Dorsolateral prefrontal cortex (tissue), 120 donors: ENCODE measurements at regions of chr3 and their contacts with region 1.

Region 1: DNA sequence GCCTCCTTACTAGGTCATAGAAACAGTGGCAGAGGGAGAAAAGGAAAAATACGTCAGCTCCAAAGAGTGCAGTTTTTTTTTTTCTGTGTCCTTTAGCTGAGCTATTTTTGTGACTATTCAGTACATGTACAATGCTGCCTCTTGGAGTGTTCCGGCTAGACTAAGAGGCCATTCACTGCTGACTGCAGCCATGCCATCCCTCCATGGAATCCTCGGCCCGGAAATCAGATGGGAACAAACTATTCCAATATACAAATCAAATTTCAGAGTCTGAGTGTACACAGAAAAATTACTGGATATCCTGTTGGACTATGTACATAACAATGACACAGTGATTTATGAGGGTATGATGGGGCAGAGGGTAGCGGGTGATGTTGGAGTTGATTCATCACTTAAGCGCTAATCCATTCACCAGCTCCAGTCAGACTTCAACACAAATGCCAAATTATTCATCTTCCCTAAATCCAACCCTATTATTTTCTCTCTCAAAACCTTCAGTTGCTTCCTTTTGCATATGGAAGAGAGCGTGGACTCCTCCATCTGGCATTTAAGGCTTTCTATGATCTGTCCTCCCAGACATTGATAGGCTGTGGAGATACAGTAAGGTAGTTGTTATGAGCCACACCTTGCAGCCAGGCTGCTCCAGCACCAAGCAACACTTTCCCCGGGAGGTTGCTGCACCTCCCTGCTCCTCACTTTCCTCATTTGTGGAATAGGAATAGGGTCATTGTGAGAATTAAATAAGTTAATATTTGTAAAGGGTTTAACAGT is 109.1 kb downstream of the LPP start:
- DNase-seq: peak in 6 of 10 donors; percentile 52 to 76 (median 60)
- H3K4me3 ChIP-seq: peak overlapping the region in 26 of 59 donors; percentile 2 to 50 (median 18)
- H3K27ac ChIP-seq: peak overlapping the region; percentile 27 to 95 (median 82)
- H3K27me3 ChIP-seq: no peaks in the 10 kb centered on the region
- CTCF ChIP-seq: peak in 18 of 56 donors; percentile 6 to 41 (median 20)

Region 2: GRCh38 chr3:187745201-187746058 is 517.7 kb before region 1 on chr3 and contains the start of gene BCL6:
- intact Hi-C with region 1: loop called (anchors 2 to 5 kb)
- DNase-seq: peak; percentile 82 to 92 (median 90)
- H3K4me3 ChIP-seq: peak within 1 kb of the TSS; percentile 55 to 98 (median 83)
- H3K27ac ChIP-seq: peak within 1 kb of the TSS; percentile 87 to 100 (median 99)
- H3K27me3 ChIP-seq: no peaks in the 10 kb centered on the region
- CTCF ChIP-seq: peak in 13 of 56 donors; percentile 1 to 27 (median 9)
- total RNA-seq, gene BCL6: 47.6 to 270 (median 94.0) TPM

Region 3: GRCh38 chr3:188154014-188154808 is 108.9 kb before region 1 on chr3 and contains the start of gene LPP:
- intact Hi-C with region 1: loop called (anchors 5 to 10 kb)
- DNase-seq: peak; percentile 28 to 81 (median 54)
- H3K4me3 ChIP-seq: peak within 1 kb of the TSS; percentile 63 to 94 (median 84)
- H3K27ac ChIP-seq: peak within 1 kb of the TSS; percentile 35 to 94 (median 83)
- H3K27me3 ChIP-seq: no peaks in the 10 kb centered on the region
- CTCF ChIP-seq: peak in 21 of 56 donors; percentile 4 to 35 (median 14)
- total RNA-seq, gene LPP: 32.7 to 187 (median 61.2) TPM

Region 4: DNA sequence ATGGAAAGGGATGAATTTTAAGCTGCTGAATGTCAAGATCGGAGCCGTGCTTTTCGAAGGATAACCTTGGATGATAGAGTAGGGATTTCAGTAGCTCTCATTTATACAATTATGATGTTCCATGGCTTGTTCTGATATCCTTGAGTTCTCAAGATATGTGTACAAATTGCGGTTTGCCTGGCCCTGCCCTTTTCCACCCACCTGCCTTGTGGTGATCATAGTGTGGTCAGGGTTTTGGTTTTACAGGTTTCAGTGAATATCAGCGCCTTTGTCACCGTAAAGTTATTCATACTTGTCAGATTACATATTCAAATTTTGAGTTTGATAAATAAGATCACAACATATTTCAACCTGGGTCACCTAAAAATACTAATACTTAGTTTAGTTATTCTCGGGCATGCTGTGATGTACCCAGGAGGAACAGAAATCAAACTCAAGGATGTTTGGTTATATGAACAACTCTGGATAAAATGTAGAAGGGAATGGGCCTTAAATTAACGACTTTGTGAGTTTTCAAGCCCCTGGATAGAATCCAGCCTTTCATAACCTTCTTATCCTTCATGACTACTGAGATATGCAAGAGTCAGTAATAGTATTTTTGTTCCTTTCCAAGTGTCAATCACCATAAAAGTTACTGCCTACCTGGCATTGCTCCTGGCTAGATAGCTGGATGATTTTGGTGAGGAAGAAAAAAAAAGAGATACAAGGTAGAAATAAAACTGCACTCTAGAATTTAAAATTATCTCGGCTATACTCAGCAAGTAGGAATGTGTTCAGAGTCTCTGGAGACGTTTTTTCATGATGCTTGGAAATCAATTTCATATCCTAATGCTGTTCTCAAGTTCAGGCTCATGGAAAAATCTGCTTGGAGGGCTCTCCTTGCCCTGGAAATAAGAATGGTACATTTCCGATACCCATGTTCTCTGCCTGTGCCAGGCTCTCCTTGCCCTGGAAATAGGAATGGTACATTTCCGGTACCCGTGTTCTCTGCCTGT is 699.5 kb after region 1 on chr3:
- intact Hi-C with region 1: no loop called
- DNase-seq: no peak
- H3K4me3 ChIP-seq: no peak overlapping the region
- H3K27ac ChIP-seq: no peak overlapping the region
- H3K27me3 ChIP-seq: no peaks in the 10 kb centered on the region
- CTCF ChIP-seq: no peak